Endothelial cell of umbilical vein (primary cell): ENCODE measurements at regions of chr3 and their contacts with region 1.

Region 1: GRCh38 chr3:146092230-146092629 is 68.8 kb downstream of the PLOD2 start:
- DNase-seq: peak; percentile 43
- H3K4me3 ChIP-seq: no peak overlapping the region
- H3K27ac ChIP-seq: no peak overlapping the region
- H3K4me1 ChIP-seq: peaks cover 13% of the 10 kb centered on the region
- H3K27me3 ChIP-seq: no peaks in the 10 kb centered on the region
- CTCF ChIP-seq: no peak
- POLR2A ChIP-seq: no peak

Region 2: DNA sequence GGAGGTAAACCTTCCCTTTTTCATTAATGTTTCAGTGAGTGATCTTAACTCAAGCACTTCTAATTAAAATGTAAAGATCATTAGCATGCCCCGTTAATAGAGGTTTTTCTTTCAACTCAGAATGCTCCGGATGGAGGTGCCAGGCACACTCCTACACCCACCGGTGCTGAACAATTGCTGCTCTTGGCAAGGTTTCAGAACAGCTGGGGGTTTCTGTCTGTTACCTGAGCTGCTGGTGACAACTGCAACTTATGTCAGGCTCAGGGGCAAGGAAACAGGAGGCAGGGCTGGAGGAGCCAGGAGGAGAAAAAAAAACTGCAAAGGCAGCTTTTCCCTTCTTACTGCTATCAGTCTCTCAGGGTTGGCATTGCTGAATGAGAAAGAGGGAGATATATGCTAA is 1870.5 kb before region 1 on chr3:
- CTCF ChIA-PET with region 1: no interaction called
- POLR2A ChIA-PET with region 1: no interaction called
- dilution Hi-C with region 1: no loop called
- intact Hi-C with region 1: no loop called
- DNase-seq: no peak
- H3K4me3 ChIP-seq: no peak overlapping the region
- H3K27ac ChIP-seq: no peak overlapping the region
- H3K4me1 ChIP-seq: no peaks in the 10 kb centered on the region
- H3K27me3 ChIP-seq: no peaks in the 10 kb centered on the region
- CTCF ChIP-seq: no peak
- POLR2A ChIP-seq: no peak

Region 3: GRCh38 chr3:145716519-145716918 is 375.7 kb before region 1 on chr3:
- CTCF ChIA-PET with region 1: no interaction called
- POLR2A ChIA-PET with region 1: no interaction called
- dilution Hi-C with region 1: no loop called
- intact Hi-C with region 1: no loop called
- DNase-seq: no peak
- H3K4me3 ChIP-seq: no peak overlapping the region
- H3K27ac ChIP-seq: no peak overlapping the region
- H3K4me1 ChIP-seq: no peaks in the 10 kb centered on the region
- H3K27me3 ChIP-seq: no peaks in the 10 kb centered on the region
- CTCF ChIP-seq: no peak
- POLR2A ChIP-seq: no peak

Region 4: DNA sequence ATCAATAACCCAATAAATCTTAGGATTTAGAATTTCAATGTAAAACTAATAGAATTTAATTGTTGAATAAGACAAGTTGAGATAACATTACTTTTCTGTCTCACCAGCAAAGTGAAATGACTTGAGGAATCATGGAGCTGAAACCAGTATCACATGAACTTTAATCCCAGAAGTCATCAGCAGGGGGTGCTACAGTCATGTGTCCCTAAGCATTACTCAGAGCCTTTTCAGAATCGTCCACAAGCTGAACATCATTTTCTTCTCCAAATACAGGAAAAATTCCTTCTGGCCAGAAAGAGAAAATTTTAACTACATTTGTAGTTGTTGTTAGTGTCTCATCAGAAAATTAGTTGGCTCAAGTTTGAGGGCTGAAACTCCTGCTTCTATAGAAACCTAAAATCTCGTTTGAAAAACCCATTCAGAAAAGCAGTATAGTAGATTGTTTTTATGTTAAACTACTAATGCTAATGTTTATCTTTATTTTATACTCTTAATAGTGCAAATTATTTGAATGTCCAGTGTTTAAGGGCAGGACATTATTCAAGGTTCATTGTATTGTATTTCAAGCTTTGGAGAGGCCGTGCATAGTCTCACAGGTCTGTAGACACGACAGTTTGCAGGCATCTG is 315.3 kb before region 1 on chr3:
- CTCF ChIA-PET with region 1: no interaction called
- POLR2A ChIA-PET with region 1: no interaction called
- dilution Hi-C with region 1: no loop called
- intact Hi-C with region 1: no loop called
- DNase-seq: peak; percentile 80
- H3K4me3 ChIP-seq: no peak overlapping the region
- H3K27ac ChIP-seq: no peak overlapping the region
- H3K4me1 ChIP-seq: no peaks in the 10 kb centered on the region
- H3K27me3 ChIP-seq: peaks cover 0 to 3% of the 10 kb centered on the region in 2 experiments
- CTCF ChIP-seq: peak; percentile 53 to 62
- POLR2A ChIP-seq: no peak

Region 5: DNA sequence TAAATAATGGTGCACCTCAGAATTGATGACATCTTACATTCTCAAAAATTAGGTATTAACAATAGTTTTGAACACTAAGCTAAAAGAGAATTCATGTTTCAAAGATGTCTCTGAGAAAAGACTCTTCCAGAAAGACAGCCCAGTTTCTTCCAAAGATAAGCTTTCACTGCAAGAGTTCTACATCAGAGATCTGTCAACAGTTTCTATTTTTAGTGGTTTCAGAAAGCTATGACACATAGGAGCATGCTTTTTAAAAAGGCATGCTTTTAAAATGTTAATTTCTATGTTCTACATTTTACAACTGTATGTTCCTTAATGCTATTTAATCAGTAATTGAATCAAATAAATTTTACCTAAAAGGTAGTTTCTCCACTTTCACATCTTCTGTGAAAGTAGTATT is 19.4 kb before region 1 on chr3:
- CTCF ChIA-PET with region 1: interaction called, 5 read pairs
- POLR2A ChIA-PET with region 1: no interaction called
- dilution Hi-C with region 1: no loop called
- intact Hi-C with region 1: loop called (anchors 2 kb)
- DNase-seq: no peak
- H3K4me3 ChIP-seq: no peak overlapping the region
- H3K27ac ChIP-seq: no peak overlapping the region
- H3K4me1 ChIP-seq: no peaks in the 10 kb centered on the region
- H3K27me3 ChIP-seq: no peaks in the 10 kb centered on the region
- CTCF ChIP-seq: no peak
- POLR2A ChIP-seq: no peak

Region 6: DNA sequence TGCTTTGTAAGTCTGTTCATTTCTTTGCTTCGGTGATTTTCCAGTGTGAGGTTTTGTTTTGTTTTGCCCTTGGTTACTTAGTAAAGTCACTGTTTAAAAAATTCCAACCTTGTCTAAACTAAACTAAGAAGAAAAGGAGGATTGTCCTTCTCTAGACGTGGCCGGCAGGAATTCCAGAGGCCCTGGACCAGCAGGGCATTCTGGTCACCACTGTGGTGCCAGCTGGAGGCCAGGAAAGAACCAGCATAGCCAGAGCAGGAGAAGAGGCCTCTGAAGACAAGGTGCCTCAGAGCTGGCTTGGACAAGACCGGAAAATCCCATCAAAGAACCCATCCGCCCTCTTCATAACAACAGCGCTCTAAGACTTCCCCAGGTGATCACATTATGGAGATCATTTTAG is 60.6 kb after region 1 on chr3:
- CTCF ChIA-PET with region 1: no interaction called
- POLR2A ChIA-PET with region 1: no interaction called
- dilution Hi-C with region 1: no loop called
- intact Hi-C with region 1: no loop called
- DNase-seq: no peak
- H3K4me3 ChIP-seq: no peak overlapping the region
- H3K27ac ChIP-seq: no peak overlapping the region
- H3K4me1 ChIP-seq: peaks cover 26% of the 10 kb centered on the region
- H3K27me3 ChIP-seq: no peaks in the 10 kb centered on the region
- CTCF ChIP-seq: no peak
- POLR2A ChIP-seq: no peak